ENCODE measurements at regions of chr19 and their contacts with region 1.

Region 1: DNA sequence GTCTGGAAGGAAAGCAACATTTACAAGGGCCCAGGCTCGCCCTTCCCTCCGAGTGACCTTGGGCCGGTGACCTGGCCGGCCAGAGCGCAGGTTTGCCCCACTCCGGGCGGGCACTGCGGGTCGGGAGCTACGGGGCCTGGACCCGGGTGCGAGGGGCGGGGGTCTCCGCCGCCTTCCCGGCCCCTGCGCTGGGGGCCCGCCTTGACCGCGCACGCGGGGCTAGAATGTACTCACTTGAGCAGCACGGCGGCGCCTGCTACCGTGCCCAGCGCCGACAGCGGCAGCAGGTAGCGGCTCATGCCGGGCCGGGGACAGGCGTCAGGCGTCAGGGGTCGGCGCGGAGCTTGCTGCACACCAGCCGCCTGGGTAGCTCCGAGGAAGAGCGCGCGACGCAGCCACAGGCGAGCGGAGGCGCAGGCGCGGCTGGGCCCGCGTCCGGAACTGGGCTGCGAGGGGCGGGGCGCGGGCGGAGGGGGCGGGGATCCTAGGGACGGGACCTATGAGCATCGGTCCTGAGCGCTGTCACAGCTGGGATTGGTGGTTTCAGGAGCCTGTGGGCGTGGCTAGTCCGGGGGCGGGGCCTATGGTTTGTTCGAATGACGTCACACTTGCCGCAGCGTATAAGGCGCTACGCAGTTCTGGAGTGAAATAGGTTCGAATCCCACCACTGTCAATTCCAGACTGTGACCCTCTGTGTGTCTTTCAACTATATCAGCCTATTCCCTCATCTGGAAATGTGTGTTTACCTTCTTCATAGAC is at the start of gene RDH13:
- DNase-seq: peak; percentile 99
- H3K4me3 Mint-ChIP-seq: peak within 1 kb of the TSS; percentile 80
- H3K27ac Mint-ChIP-seq: no peak within 1 kb of the TSS
- H3K4me1 Mint-ChIP-seq: peaks cover 8% of the 10 kb centered on the region
- H3K27me3 Mint-ChIP-seq: peaks cover 12% of the 10 kb centered on the region
- total RNA-seq, gene RDH13: 11.0 to 12.8 TPM

Region 2: GRCh38 chr19:55005684-55006488 is 57.0 kb before region 1 on chr19:
- CTCF ChIA-PET with region 1: no interaction called
- POLR2A ChIA-PET with region 1: no interaction called
- intact Hi-C with region 1: loop called (anchors 1 kb)
- DNase-seq: peak; percentile 61
- H3K4me3 Mint-ChIP-seq: peak overlapping the region; percentile 85
- H3K27ac Mint-ChIP-seq: peak overlapping the region; percentile 77
- H3K4me1 Mint-ChIP-seq: peaks cover 23% of the 10 kb centered on the region
- H3K27me3 Mint-ChIP-seq: peaks cover 7% of the 10 kb centered on the region

Region 3: DNA sequence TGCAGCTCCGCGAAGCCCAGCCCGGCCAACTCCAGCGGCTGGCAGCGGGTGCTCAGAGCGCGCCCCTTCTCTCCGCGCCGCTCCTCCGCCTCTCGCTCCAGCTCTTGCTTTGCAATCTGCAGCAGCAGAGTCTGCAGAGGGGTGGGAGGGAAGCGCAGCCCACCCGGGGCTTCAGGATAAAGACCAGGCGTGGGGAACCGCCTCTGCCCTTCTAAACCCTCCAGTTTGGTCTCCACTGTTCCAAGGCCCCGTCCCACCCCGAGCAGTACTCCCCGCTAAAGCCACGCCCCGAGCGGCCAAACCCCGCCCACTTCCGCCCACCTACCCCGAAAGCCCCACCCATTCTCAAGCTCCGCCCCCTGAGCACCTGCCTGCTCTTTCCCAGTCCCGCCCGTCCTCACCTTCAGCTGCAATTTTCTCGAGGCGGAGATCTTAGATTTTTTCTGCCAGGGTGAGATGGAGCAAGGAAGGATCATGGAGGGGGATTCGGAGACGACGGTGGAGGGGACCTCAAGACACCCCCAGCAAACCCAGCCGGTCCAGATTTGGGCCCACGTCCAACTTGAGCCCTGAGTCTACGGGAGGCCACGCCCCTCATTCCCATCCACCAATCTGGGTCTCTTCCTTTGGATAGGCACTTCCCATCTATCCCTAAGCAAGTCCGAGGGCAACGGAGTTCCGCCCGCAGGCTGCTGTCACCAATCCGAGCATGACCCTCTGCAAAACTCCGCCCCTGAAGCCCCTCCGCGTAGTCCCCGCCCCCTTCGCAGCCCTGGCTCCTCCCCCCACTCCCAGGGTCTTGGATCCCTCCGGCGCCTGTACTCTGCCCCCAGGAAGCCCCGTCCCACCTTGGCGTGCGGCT is 93.5 kb after region 1 on chr19:
- CTCF ChIA-PET with region 1: no interaction called
- POLR2A ChIA-PET with region 1: no interaction called
- intact Hi-C with region 1: no loop called
- DNase-seq: peak; percentile 60
- H3K4me3 Mint-ChIP-seq: no peak overlapping the region
- H3K27ac Mint-ChIP-seq: no peak overlapping the region
- H3K4me1 Mint-ChIP-seq: peaks cover 18% of the 10 kb centered on the region
- H3K27me3 Mint-ChIP-seq: peaks cover 29% of the 10 kb centered on the region

Region 4: GRCh38 chr19:55552620-55553019 is 489.7 kb after region 1 on chr19:
- CTCF ChIA-PET with region 1: no interaction called
- POLR2A ChIA-PET with region 1: no interaction called
- intact Hi-C with region 1: no loop called
- DNase-seq: no peak
- H3K4me3 Mint-ChIP-seq: no peak overlapping the region
- H3K27ac Mint-ChIP-seq: no peak overlapping the region
- H3K4me1 Mint-ChIP-seq: no peaks in the 10 kb centered on the region
- H3K27me3 Mint-ChIP-seq: peaks cover 6% of the 10 kb centered on the region